CD4-positive, alpha-beta memory T cell (primary cell): ENCODE measurements at regions of chr1 and their contacts with region 1.

Region 1: GRCh38 chr1:205273551-205273982 is 45.8 kb downstream of the TMCC2 start:
- DNase-seq: peak; percentile 80 to 84 (median 83)
- H3K4me3 ChIP-seq: peak overlapping the region in 1 of 2 donors; percentile 2
- H3K4me3 Mint-ChIP-seq: peak overlapping the region in 6 of 8 donors; percentile 34 to 72 (median 68)
- H3K27ac ChIP-seq: no peak overlapping the region
- H3K27ac Mint-ChIP-seq: peak overlapping the region in 5 of 7 donors; percentile 10 to 75 (median 55)
- H3K4me1 ChIP-seq: peaks cover 46% of the 10 kb centered on the region
- H3K4me1 Mint-ChIP-seq: peaks cover 21 to 46% (median 32%) of the 10 kb centered on the region in 4 donors
- H3K27me3 ChIP-seq: no peaks in the 10 kb centered on the region
- H3K27me3 Mint-ChIP-seq: no peaks in the 10 kb centered on the region

Region 2: GRCh38 chr1:205068457-205069040 is 205.0 kb before region 1 on chr1:
- CTCF ChIA-PET with region 1: no interaction called
- POLR2A ChIA-PET with region 1: no interaction called
- intact Hi-C with region 1: no loop called
- DNase-seq: no peak
- H3K4me3 ChIP-seq: no peak overlapping the region
- H3K4me3 Mint-ChIP-seq: no peak overlapping the region
- H3K27ac ChIP-seq: no peak overlapping the region
- H3K27ac Mint-ChIP-seq: no peak overlapping the region
- H3K4me1 ChIP-seq: no peaks in the 10 kb centered on the region
- H3K4me1 Mint-ChIP-seq: peaks cover 0 to 2% (median 0%) of the 10 kb centered on the region in 4 donors
- H3K27me3 ChIP-seq: no peaks in the 10 kb centered on the region
- H3K27me3 Mint-ChIP-seq: no peaks in the 10 kb centered on the region

Region 3: DNA sequence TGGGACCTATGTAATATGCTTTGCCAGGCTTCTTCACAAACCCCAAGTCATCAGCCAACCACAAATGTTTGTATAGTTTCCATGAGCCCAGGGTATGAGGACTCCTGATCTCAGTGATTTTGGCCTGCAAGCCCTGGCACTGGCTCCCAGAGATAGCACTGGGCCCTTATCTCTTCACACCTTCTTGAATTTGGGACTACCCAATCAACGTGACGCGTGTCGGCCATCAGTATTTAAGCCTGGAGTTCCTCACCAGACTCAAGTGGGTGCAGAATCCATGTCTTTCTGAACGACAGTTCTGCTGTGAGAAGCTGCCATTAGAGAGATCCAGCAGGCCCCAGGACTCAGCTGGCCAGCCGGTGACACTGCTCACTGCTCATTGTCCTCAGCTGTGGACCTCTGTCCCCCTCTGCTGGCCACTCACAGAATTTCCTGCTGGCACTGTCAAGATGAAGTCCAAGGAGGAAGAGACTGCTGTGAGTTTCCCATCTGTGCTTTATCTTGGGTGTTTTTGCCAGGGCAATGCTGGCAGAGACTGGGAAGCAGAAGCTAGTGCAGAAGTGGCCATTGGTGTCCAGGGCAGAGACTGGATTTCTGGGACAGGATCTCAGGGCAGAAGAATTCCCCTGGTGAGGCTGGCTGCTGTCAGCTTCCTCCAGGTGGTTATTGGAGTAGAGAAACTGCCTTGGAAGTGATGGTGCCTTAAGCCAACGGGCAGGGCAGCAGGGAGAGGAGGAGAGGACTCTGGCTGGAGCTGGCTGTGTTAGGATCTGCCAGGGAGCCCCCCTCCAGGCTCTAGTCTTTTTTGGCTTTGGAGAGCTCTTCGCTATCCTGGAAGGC is 17.4 kb before region 1 on chr1:
- CTCF ChIA-PET with region 1: interaction called, 27 read pairs
- POLR2A ChIA-PET with region 1: no interaction called
- intact Hi-C with region 1: no loop called
- DNase-seq: peak; percentile 76 to 82 (median 80)
- H3K4me3 ChIP-seq: no peak overlapping the region
- H3K4me3 Mint-ChIP-seq: no peak overlapping the region
- H3K27ac ChIP-seq: no peak overlapping the region
- H3K27ac Mint-ChIP-seq: peak overlapping the region in 1 of 7 donors; percentile 46
- H3K4me1 ChIP-seq: no peaks in the 10 kb centered on the region
- H3K4me1 Mint-ChIP-seq: peaks cover 0 to 2% (median 0%) of the 10 kb centered on the region in 4 donors
- H3K27me3 ChIP-seq: no peaks in the 10 kb centered on the region
- H3K27me3 Mint-ChIP-seq: peaks cover 0 to 5% of the 10 kb centered on the region in 2 donors

Region 4: GRCh38 chr1:205294175-205294913 is 20.8 kb after region 1 on chr1:
- CTCF ChIA-PET with region 1: interaction called, 229 read pairs
- POLR2A ChIA-PET with region 1: interaction called, 279 read pairs
- intact Hi-C with region 1: loop called (anchors 2 kb)
- DNase-seq: no peak
- H3K4me3 ChIP-seq: no peak overlapping the region
- H3K4me3 Mint-ChIP-seq: no peak overlapping the region
- H3K27ac ChIP-seq: no peak overlapping the region
- H3K27ac Mint-ChIP-seq: peak overlapping the region in 2 of 7 donors; percentile 68 to 79
- H3K4me1 ChIP-seq: peaks cover 72% of the 10 kb centered on the region
- H3K4me1 Mint-ChIP-seq: peaks cover 40 to 88% (median 62%) of the 10 kb centered on the region in 4 donors
- H3K27me3 ChIP-seq: no peaks in the 10 kb centered on the region
- H3K27me3 Mint-ChIP-seq: no peaks in the 10 kb centered on the region

Region 5: GRCh38 chr1:205313563-205314308 is 40.2 kb after region 1 on chr1:
- CTCF ChIA-PET with region 1: interaction called, 1,429 read pairs
- POLR2A ChIA-PET with region 1: interaction called, 1,030 read pairs
- intact Hi-C with region 1: loop called (anchors 1 kb)
- DNase-seq: peak in 2 of 5 donors; percentile 18 to 54
- H3K4me3 ChIP-seq: peak overlapping the region; percentile 17 to 20
- H3K4me3 Mint-ChIP-seq: peak overlapping the region; percentile 82 to 93 (median 86)
- H3K27ac ChIP-seq: peak overlapping the region; percentile 2
- H3K27ac Mint-ChIP-seq: peak overlapping the region; percentile 81 to 95 (median 88)
- H3K4me1 ChIP-seq: peaks cover 86% of the 10 kb centered on the region
- H3K4me1 Mint-ChIP-seq: peaks cover 66 to 95% (median 78%) of the 10 kb centered on the region in 4 donors
- H3K27me3 ChIP-seq: no peaks in the 10 kb centered on the region
- H3K27me3 Mint-ChIP-seq: no peaks in the 10 kb centered on the region

Region 6: DNA sequence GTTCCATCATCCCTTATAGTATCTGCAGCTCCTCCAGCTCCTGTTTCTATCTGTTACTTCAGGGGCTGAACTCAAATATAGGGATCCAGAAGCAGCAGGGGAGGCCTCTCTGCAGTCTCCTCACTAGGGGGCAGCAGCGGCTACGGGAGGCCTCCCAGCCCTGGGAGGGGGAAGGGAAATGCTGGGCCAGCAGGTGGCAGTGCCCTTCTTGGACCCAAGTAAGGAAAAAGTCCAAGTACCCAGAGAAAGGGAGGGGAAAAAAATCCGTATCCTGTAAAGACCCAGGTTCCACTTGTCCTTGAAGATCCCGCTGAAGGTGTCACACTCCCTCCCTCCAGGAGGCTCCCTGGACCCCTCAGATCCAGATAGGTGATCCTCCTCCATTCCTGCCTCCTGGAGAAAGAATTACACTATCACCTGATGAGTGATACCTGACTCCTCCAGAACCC is 62.1 kb after region 1 on chr1:
- CTCF ChIA-PET with region 1: interaction called, 1,429 read pairs
- POLR2A ChIA-PET with region 1: interaction called, 1,030 read pairs
- intact Hi-C with region 1: no loop called
- DNase-seq: peak; percentile 68 to 72 (median 70)
- H3K4me3 ChIP-seq: no peak overlapping the region
- H3K4me3 Mint-ChIP-seq: no peak overlapping the region
- H3K27ac ChIP-seq: no peak overlapping the region
- H3K27ac Mint-ChIP-seq: no peak overlapping the region
- H3K4me1 ChIP-seq: no peaks in the 10 kb centered on the region
- H3K4me1 Mint-ChIP-seq: peaks cover 0 to 2% (median 0%) of the 10 kb centered on the region in 4 donors
- H3K27me3 ChIP-seq: no peaks in the 10 kb centered on the region
- H3K27me3 Mint-ChIP-seq: peaks cover 0 to 2% of the 10 kb centered on the region in 2 donors

Region 7: GRCh38 chr1:205354259-205354904 is 80.8 kb after region 1 on chr1:
- CTCF ChIA-PET with region 1: interaction called, 26 read pairs
- POLR2A ChIA-PET with region 1: interaction called, 8 read pairs
- intact Hi-C with region 1: loop called (anchors 1 kb)
- DNase-seq: peak; percentile 57 to 70 (median 62)
- H3K4me3 ChIP-seq: no peak overlapping the region
- H3K4me3 Mint-ChIP-seq: no peak overlapping the region
- H3K27ac ChIP-seq: no peak overlapping the region
- H3K27ac Mint-ChIP-seq: no peak overlapping the region
- H3K4me1 ChIP-seq: no peaks in the 10 kb centered on the region
- H3K4me1 Mint-ChIP-seq: no peaks in the 10 kb centered on the region
- H3K27me3 ChIP-seq: peaks cover 4% of the 10 kb centered on the region
- H3K27me3 Mint-ChIP-seq: peaks cover 12 to 16% of the 10 kb centered on the region in 2 donors

Region 8: GRCh38 chr1:205700865-205701401 is 427.4 kb after region 1 on chr1:
- CTCF ChIA-PET with region 1: no interaction called
- POLR2A ChIA-PET with region 1: no interaction called
- intact Hi-C with region 1: no loop called
- DNase-seq: no peak
- H3K4me3 ChIP-seq: no peak overlapping the region
- H3K4me3 Mint-ChIP-seq: no peak overlapping the region
- H3K27ac ChIP-seq: no peak overlapping the region
- H3K27ac Mint-ChIP-seq: no peak overlapping the region
- H3K4me1 ChIP-seq: no peaks in the 10 kb centered on the region
- H3K4me1 Mint-ChIP-seq: no peaks in the 10 kb centered on the region
- H3K27me3 ChIP-seq: no peaks in the 10 kb centered on the region
- H3K27me3 Mint-ChIP-seq: peaks cover 6 to 9% of the 10 kb centered on the region in 2 donors